ENCODE measurements at regions of chr19 and their contacts with region 1.

Region 1: GRCh38 chr19:16572332-16573211 is at the start of gene SLC35E1:
- DNase-seq: peak; percentile 90 to 97 (median 96)
- ATAC-seq: peak; percentile 88
- H3K4me3 ChIP-seq: peak within 1 kb of the TSS; percentile 95
- H3K27ac ChIP-seq: peak within 1 kb of the TSS; percentile 58 to 88
- H3K4me1 ChIP-seq: peaks cover 35 to 52% of the 10 kb centered on the region in 2 donors
- H3K27me3 ChIP-seq: no peaks in the 10 kb centered on the region
- CTCF ChIP-seq: no peak
- polyA plus RNA-seq, gene SLC35E1: 46.5 to 56.7 (median 50.6) TPM

Region 2: GRCh38 chr19:16528073-16528472 is 44.5 kb before region 1 on chr19:
- intact Hi-C with region 1: no loop called
- DNase-seq: no peak
- ATAC-seq: no peak
- H3K4me3 ChIP-seq: no peak overlapping the region
- H3K27ac ChIP-seq: no peak overlapping the region
- H3K4me1 ChIP-seq: no peaks in the 10 kb centered on the region
- H3K27me3 ChIP-seq: no peaks in the 10 kb centered on the region
- CTCF ChIP-seq: no peak

Region 3: GRCh38 chr19:16628183-16628983 is 55.8 kb after region 1 on chr19 and contains the start of gene MED26:
- intact Hi-C with region 1: loop called in 1 of 2 experiments (anchors 10 kb)
- DNase-seq: peak; percentile 95 to 98 (median 98)
- ATAC-seq: peak; percentile 90
- H3K4me3 ChIP-seq: peak within 1 kb of the TSS; percentile 96 to 99
- H3K27ac ChIP-seq: peak within 1 kb of the TSS; percentile 88 to 90
- H3K4me1 ChIP-seq: peaks cover 14 to 54% of the 10 kb centered on the region in 2 donors
- H3K27me3 ChIP-seq: no peaks in the 10 kb centered on the region
- CTCF ChIP-seq: peak in 1 of 2 donors; percentile 18
- polyA plus RNA-seq, gene MED26: 7.0 to 9.7 (median 8.4) TPM